Activated T-helper 2 cell treated with anti-CD3 and anti-CD28 coated beads, Interferon-gamma antibody, Interleukin-2, Interleukin-4, amounts not matched to agents 10 μg/mL and 5 μg/mL and 100 μg/mL, durations not matched to agents 14 hours and 24 hours and 36 hours (primary cell): ENCODE measurements at regions of chr10 and their contacts with region 1.

Region 1: DNA sequence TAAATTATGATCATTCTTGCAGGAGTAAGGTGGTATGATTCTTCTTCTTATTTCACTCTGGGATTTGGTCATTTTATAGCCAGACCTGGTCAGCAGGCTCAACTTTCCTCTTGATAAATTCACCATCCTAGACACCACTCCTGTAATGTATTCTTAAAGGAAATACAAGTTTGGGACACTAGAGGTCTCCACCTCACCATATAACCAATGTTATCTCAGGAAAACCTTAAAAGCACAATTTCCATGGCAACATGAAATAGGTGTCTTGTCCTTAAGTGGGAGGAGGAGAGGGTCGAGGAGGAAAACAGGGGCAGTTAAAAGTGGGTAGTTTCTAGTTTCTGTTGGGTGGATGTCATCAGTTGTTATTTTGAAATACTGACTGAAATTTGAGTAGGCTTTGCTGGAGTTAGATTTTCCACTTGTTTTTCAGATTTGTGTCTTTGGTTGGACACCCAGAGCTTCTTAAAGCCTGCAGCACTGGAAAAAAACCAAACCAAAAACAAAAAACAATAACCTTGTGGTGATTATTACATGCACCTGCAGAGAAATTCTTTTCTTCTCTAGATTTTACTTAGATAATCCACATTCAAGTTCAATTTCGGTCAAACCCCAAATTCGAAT is 163.1 kb downstream of the PRKCQ start:
- DNase-seq: no peak
- H3K4me3 Mint-ChIP-seq: no peak overlapping the region
- H3K27ac Mint-ChIP-seq: no peak overlapping the region
- H3K4me1 Mint-ChIP-seq: peaks cover 5% of the 10 kb centered on the region
- H3K27me3 Mint-ChIP-seq: no peaks in the 10 kb centered on the region

Region 2: DNA sequence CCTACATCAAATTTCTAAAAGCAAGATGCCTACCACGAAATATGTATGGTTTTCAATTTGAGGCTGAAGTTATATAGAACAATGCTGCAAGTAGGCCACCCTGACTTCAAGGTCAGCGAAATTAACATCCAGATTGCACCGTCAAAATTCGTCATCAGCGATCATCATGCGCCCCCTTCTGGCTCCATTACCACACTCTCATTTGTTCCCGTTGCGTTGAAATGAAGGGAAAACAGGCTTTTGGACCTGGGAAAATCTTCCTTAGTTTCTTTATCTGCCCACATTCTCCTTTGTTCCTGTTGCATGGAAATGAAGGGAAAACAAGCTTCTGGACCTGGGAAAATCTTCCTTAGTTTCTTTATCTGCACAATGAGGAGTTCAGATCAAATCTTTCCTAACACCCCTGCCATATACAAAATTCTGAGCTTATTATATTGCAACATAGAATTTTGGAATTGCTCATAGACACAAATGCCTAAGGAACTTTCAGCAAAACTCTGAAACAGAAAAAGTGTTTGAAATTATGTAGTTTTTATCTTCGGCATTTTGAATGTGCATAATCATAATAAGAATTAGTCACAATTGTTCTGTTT is 261.3 kb after region 1 on chr10:
- intact Hi-C with region 1: loop called (anchors 1 kb)
- DNase-seq: peak; percentile 45
- H3K4me3 Mint-ChIP-seq: no peak overlapping the region
- H3K27ac Mint-ChIP-seq: no peak overlapping the region
- H3K4me1 Mint-ChIP-seq: peaks cover 21% of the 10 kb centered on the region
- H3K27me3 Mint-ChIP-seq: peaks cover 50% of the 10 kb centered on the region

Region 3: GRCh38 chr10:7075110-7075509 is 658.1 kb after region 1 on chr10:
- intact Hi-C with region 1: no loop called
- DNase-seq: no peak
- H3K4me3 Mint-ChIP-seq: no peak overlapping the region
- H3K27ac Mint-ChIP-seq: no peak overlapping the region
- H3K4me1 Mint-ChIP-seq: peaks cover 7% of the 10 kb centered on the region
- H3K27me3 Mint-ChIP-seq: peaks cover 34% of the 10 kb centered on the region

Region 4: DNA sequence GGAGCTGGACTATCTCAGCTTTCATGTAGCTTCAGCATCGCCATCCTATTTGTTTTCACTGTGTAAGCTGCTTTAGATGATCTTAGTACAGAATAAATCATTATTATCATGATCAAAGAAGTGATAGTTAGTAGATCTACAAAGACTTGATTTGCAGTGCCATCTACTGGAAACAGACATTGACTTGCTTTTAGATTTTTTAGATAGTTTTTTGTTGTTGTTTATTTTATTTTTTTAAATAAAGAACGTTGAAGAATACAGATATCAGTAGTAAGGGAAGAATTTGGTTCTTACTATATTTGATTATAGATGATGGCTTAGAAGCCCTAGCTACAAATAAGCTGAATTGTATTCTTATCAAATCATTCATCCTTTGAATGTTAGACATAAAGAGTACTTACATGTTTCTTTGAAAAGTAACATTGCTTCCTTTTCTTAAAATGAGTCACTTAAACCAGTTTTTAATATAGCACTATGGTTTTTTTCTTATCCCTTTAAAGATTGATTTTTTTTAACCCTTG is 1000.2 kb after region 1 on chr10:
- intact Hi-C with region 1: loop called (anchors 2 kb)
- DNase-seq: no peak
- H3K4me3 Mint-ChIP-seq: no peak overlapping the region
- H3K27ac Mint-ChIP-seq: peak overlapping the region; percentile 33
- H3K4me1 Mint-ChIP-seq: peaks cover 24% of the 10 kb centered on the region
- H3K27me3 Mint-ChIP-seq: peaks cover 46% of the 10 kb centered on the region